Activated naive CD4-positive, alpha-beta T cell treated with anti-CD3 and anti-CD28 coated beads for 36 hours (primary cell): ENCODE measurements at regions of chr7 and their contacts with region 1.

Region 1: GRCh38 chr7:12524794-12525386 is 45.6 kb upstream of the SCIN start:
- DNase-seq: no peak
- H3K4me3 Mint-ChIP-seq: no peak overlapping the region
- H3K27ac Mint-ChIP-seq: no peak overlapping the region
- H3K4me1 Mint-ChIP-seq: no peaks in the 10 kb centered on the region
- H3K27me3 Mint-ChIP-seq: peaks cover 21% of the 10 kb centered on the region

Region 2: DNA sequence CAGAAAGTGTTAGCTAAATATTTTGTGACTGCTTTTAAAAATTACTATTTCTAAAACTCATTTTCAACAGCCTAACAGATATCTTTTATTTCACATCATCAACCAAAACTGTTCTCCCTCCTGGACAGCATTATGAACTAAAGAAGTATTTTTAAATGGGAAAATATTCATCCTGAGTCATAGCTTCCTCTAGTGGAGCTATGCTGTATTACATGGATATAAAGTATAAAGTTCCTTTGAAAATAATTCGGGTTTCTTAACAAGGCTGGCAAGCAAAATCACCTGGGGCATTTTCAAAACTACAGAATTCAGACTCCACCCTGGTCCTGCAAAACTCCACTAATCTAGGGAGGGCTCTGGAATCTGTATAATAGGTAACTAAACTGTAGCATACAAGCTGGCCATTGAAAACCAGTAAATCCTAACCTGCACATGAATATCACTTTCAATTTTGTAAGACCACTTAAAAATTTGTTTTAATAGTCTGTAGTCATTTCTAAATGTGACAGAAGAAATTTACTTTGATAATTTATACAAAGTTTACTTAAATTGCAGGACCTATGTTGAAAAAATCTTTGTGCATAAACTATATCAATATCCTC is 99.1 kb after region 1 on chr7:
- CTCF ChIA-PET with region 1: interaction called, 32 read pairs
- intact Hi-C with region 1: loop called (anchors 1 kb)
- DNase-seq: no peak
- H3K4me3 Mint-ChIP-seq: no peak overlapping the region
- H3K27ac Mint-ChIP-seq: no peak overlapping the region
- H3K4me1 Mint-ChIP-seq: no peaks in the 10 kb centered on the region
- H3K27me3 Mint-ChIP-seq: peaks cover 3% of the 10 kb centered on the region

Region 3: GRCh38 chr7:13262929-13263530 is 738.1 kb after region 1 on chr7:
- CTCF ChIA-PET with region 1: interaction called, 6 read pairs
- intact Hi-C with region 1: loop called (anchors 1 kb)
- DNase-seq: no peak
- H3K4me3 Mint-ChIP-seq: no peak overlapping the region
- H3K27ac Mint-ChIP-seq: no peak overlapping the region
- H3K4me1 Mint-ChIP-seq: no peaks in the 10 kb centered on the region
- H3K27me3 Mint-ChIP-seq: peaks cover 2% of the 10 kb centered on the region